ENCODE measurements at regions of chr14 and their contacts with region 1.

Region 1: GRCh38 chr14:53613404-53614253 is 343.0 kb downstream of the BMP4 start:
- DNase-seq: peak; percentile 81
- CTCF ChIP-seq: no peak

Region 2: GRCh38 chr14:53570411-53571387 is 42.9 kb before region 1 on chr14:
- CTCF ChIA-PET with region 1: interaction called, 22 read pairs
- POLR2A ChIA-PET with region 1: interaction called, 3 read pairs
- DNase-seq: peak; percentile 74
- CTCF ChIP-seq: no peak

Region 3: DNA sequence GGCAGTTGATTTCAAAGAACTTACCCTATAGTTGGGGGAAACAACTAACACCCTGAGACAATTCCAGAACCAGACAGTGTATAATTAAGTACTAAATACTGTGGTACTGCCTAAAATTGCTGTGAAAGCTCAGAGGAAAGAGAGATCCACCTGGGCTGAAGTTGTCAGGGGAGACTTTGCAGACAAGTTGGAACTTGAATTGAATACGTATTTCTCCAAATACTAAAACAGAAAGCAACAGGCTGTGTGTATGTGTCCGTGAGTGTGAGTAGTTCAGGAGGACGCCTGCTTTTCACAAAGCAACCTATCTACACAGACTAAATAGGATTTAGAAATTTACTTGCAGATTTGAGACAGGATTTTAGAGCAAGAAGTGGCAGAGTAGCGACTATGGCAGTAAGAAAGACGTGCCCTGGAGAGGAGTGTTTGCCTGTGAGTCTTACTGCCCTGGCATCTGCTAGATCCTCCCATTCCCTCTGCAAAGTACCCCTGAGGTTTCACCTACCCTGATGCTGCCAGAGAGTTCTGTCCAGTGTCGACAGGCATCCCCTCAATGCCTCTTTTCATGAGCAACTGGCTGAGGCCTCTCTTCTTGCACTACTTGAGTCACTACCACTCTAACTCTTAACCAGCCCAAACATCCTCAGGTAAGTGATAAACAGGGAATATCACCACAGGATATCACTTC is 380.4 kb after region 1 on chr14:
- CTCF ChIA-PET with region 1: no interaction called
- POLR2A ChIA-PET with region 1: no interaction called
- DNase-seq: no peak
- CTCF ChIP-seq: no peak

Measured in GM10248 (cell line).